Activated CD8-positive, alpha-beta T cell treated with anti-CD3 and anti-CD28 coated beads, Interleukin-2, amount 10 ng/mL, durations not matched to agents 7 days and 5 days (primary cell): ENCODE measurements at regions of chr16 and their contacts with region 1.

Region 1: DNA sequence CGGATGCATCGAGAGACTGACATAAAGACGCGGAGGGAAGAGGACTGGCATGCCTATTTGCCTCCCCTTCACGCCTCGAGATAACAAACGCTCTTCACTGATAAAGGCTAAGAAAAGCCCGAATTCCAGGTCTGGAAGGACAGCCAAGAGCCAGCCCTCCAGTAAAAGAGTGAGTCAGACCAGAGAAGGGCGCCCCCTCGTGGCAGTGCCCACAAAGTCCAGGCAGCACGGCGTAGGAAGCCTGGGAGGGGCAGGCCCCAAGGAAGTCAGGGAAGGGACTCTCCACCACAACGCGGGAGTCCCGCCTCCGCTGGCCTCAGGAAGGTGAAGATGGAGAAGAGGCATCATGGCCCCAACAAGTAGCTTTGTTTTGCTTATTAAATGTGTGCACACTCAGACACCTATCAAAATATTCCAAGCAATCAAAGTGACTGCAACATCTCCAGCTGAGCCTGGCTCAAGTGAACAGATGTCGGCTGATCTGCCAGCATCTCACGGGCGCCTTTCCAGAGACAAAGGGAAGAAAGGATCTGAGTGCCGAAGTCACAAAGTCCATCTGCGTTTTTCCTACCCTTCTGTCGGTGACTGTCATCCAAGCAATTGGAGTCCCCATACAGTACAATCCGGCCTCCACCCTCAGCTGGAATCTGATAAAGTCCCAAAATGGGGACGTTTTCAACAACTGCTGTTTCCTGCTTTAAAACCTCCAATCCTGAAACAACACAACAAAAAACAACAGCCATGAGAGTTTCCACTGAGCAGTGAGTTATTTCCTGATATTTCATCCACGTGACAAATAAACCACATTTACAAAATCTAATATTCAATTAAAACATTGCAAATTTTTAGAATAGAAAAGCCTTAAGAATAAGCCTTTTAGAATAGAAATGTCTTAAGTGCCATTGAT is 20.4 kb upstream of the SLC38A8 start:
- DNase-seq: peak; percentile 73
- ATAC-seq: peak; percentile 88
- H3K4me3 Mint-ChIP-seq: no peak overlapping the region
- H3K27ac Mint-ChIP-seq: no peak overlapping the region
- H3K4me1 Mint-ChIP-seq: peaks cover 2% of the 10 kb centered on the region
- H3K27me3 Mint-ChIP-seq: no peaks in the 10 kb centered on the region

Region 2: GRCh38 chr16:83762141-83762991 is 300.6 kb before region 1 on chr16:
- CTCF ChIA-PET with region 1: no interaction called
- POLR2A ChIA-PET with region 1: no interaction called
- DNase-seq: no peak
- ATAC-seq: no peak
- H3K4me3 Mint-ChIP-seq: no peak overlapping the region
- H3K27ac Mint-ChIP-seq: no peak overlapping the region
- H3K4me1 Mint-ChIP-seq: no peaks in the 10 kb centered on the region
- H3K27me3 Mint-ChIP-seq: peaks cover 5% of the 10 kb centered on the region

Region 3: GRCh38 chr16:83952940-83953795 is 109.8 kb before region 1 on chr16 and contains the start of gene OSGIN1:
- CTCF ChIA-PET with region 1: interaction called, 32 read pairs
- POLR2A ChIA-PET with region 1: no interaction called
- DNase-seq: peak; percentile 78
- ATAC-seq: peak; percentile 84
- H3K4me3 Mint-ChIP-seq: peak within 1 kb of the TSS; percentile 48
- H3K27ac Mint-ChIP-seq: no peak within 1 kb of the TSS
- H3K4me1 Mint-ChIP-seq: peaks cover 11% of the 10 kb centered on the region
- H3K27me3 Mint-ChIP-seq: peaks cover 5% of the 10 kb centered on the region
- total RNA-seq, gene OSGIN1: 0.24 to 0.26 TPM

Region 4: GRCh38 chr16:83964684-83965443 is 98.1 kb before region 1 on chr16:
- CTCF ChIA-PET with region 1: interaction called, 12 read pairs
- POLR2A ChIA-PET with region 1: no interaction called
- DNase-seq: no peak
- ATAC-seq: no peak
- H3K4me3 Mint-ChIP-seq: no peak overlapping the region
- H3K27ac Mint-ChIP-seq: no peak overlapping the region
- H3K4me1 Mint-ChIP-seq: peaks cover 2% of the 10 kb centered on the region
- H3K27me3 Mint-ChIP-seq: peaks cover 12% of the 10 kb centered on the region

Region 5: DNA sequence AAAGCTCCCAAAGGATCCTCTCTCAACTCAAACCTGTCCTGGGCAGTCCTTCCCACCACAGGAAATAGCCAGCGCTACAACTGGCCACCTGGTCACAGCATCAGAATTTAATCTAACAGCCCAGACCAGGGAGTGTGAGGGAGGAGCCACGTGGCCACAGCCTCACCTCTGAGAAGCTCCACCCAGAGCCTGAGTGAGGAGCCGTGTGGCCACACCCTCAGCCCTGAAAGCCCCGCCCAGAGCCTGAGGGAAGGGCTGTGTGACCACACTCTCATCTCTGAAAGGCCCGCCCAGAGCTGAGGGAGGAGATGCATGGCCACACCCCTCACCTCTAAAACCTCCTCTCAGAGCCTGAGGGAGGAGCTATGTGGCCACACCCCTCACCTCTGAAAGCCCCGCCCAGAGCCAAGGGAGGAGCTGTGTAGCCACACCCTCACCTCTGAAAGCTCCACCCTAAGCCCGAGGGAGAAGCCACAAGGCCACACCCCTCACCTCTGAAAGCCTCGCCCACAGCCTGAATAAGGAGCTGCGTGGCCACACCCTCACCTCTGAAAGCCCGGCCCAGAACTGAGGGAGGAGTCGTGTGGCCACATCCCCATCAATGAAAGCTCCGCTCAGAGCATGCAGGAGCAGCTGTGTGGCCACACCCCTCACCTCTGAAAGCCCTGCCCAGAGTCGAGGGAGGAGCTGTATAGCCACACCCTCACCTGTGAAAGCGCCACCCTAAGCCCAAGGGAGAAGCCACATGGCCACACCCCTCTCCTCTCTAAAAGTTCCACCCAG is 49.0 kb before region 1 on chr16:
- CTCF ChIA-PET with region 1: no interaction called
- POLR2A ChIA-PET with region 1: no interaction called
- DNase-seq: peak; percentile 73
- ATAC-seq: peak; percentile 80
- H3K4me3 Mint-ChIP-seq: no peak overlapping the region
- H3K27ac Mint-ChIP-seq: no peak overlapping the region
- H3K4me1 Mint-ChIP-seq: peaks cover 6% of the 10 kb centered on the region
- H3K27me3 Mint-ChIP-seq: no peaks in the 10 kb centered on the region

Region 6: DNA sequence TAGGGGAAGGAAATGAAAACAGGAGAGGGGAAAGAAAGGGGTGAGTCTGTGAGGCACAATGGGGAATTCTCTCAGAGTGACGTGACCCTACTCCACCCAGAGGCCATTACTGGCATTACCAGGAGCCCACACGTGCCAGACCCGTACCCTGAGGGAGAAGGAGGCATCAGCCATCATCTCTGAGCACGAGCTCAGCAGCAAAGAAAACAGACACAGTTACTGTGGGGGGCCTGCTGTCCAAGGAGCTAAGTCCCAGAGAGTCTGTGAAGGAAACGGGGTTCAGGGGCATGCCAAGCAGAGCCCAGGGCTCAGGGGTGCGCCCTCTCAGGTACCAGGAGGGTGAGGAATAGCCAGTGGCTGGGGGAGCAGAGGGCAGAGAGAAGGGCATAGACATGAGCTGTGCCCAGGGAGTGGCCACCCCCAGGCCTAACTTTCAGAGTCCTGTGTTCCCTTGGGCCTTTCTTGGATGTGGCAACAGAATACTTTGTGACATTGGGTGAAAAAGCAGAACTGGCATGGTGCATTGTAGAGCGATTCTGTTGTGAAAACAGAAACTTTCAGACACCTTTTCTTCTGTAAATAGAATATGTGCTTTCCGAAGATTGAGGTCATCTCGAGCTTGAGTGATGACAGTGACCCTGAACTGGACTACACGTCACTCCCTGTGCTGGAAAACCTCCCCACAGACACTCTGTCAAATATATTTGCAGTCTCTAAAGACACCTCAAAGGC is 112.5 kb after region 1 on chr16:
- CTCF ChIA-PET with region 1: interaction called, 11 read pairs
- POLR2A ChIA-PET with region 1: no interaction called
- DNase-seq: peak; percentile 74
- ATAC-seq: peak; percentile 93
- H3K4me3 Mint-ChIP-seq: no peak overlapping the region
- H3K27ac Mint-ChIP-seq: no peak overlapping the region
- H3K4me1 Mint-ChIP-seq: peaks cover 4% of the 10 kb centered on the region
- H3K27me3 Mint-ChIP-seq: peaks cover 3% of the 10 kb centered on the region